IMR-90 (cell line): ENCODE measurements at regions of chr9 and their contacts with region 1.

Region 1: DNA sequence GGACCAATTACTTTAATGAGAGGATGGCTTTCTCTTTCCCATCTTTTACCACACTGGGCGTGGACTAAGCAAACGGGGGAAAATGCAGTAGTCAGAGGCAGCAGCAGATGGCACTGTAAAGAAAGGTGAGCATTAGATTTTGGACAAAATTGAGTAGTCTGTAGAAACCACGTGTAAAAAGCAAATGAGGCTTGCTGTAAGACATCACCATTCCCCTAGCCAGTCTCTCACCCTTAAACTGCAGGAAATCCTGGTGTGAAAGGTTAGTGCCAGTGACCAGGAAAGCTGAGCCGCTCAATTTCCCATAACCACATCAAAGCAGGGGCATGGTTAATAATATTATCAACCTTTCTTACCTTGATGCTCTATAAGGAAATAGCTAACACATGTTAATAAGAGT is 31.8 kb downstream of the SPATA31C2 start:
- DNase-seq: peak; percentile 36
- ATAC-seq: peak; percentile 77
- H3K4me3 ChIP-seq: no peak overlapping the region
- H3K27ac ChIP-seq: no peak overlapping the region
- H3K4me1 ChIP-seq: no peaks in the 10 kb centered on the region
- H3K27me3 ChIP-seq: peaks cover 6% of the 10 kb centered on the region; the same call in 1 of the 2 replicates
- CTCF ChIP-seq: peak; percentile 58
- POLR2A ChIP-seq: no peak
- RAD21 ChIP-seq: peak; percentile 50

Region 2: DNA sequence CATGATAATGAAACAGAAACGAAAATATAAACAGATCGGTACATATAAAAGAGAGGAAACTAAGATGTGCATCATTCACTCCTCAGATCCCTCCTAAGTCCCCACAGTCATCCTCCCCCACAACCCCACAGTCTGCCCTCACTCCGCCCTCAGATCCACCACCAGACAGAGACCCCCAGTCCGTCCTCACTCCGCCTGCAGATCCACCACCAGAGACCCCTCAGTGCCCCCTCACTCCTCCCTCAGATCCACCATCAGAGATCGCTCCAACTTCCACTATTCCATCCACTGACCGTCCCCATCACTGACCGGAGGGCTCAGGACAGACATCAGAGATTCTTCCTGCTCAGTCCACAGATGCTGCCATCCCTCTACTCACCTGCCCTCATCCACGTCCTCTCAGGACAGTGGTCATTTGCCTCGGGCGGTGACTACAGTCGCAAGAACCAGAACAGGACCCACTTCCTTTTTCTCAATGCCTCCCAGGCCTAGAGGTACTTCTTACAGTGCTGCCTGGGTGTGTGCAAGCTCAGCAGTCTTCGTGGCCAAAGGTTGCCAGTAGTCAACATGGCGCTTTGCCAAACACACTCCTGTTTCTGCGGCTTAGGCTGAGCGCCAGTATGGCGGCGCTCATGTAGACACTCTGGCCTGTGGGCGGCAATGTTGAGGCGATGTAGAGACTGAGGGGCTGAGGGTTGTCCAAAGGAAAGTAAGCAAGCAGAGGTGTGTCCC is 197.0 kb before region 1 on chr9:
- CTCF ChIA-PET with region 1: no interaction called
- POLR2A ChIA-PET with region 1: no interaction called
- dilution Hi-C with region 1: no loop called
- in situ Hi-C with region 1: no loop called
- intact Hi-C with region 1: no loop called
- DNase-seq: no peak
- ATAC-seq: no peak
- H3K4me3 ChIP-seq: no peak overlapping the region
- H3K27ac ChIP-seq: no peak overlapping the region
- H3K4me1 ChIP-seq: no peaks in the 10 kb centered on the region
- H3K27me3 ChIP-seq: no peaks in the 10 kb centered on the region
- CTCF ChIP-seq: no peak
- POLR2A ChIP-seq: no peak
- RAD21 ChIP-seq: no peak

Region 3: DNA sequence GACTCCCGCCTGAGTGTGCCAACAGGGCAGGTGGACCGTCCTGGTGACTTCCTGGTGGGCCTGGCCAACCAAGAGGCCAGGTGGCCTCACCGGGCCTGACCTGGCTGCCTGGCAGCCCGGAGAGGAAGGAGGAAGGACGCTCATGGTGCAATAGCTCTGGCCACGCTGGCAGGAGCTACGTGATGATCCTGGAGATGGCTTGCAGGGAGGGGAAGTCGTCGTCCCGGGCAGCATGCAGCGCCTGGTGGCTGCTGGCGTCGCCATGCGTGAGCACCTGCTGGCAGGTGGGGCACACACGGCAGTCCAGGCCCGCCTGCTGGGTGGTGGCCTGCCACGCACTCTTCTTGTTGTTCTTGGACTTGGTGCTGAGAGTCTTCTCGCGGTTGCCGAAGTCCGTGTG is 162.4 kb before region 1 on chr9:
- CTCF ChIA-PET with region 1: no interaction called
- POLR2A ChIA-PET with region 1: no interaction called
- dilution Hi-C with region 1: no loop called
- in situ Hi-C with region 1: no loop called
- intact Hi-C with region 1: loop called (anchors 10 kb)
- DNase-seq: no peak
- ATAC-seq: no peak
- H3K4me3 ChIP-seq: no peak overlapping the region
- H3K27ac ChIP-seq: no peak overlapping the region
- H3K4me1 ChIP-seq: no peaks in the 10 kb centered on the region
- H3K27me3 ChIP-seq: peaks cover 2% of the 10 kb centered on the region; the same call in 1 of the 2 replicates
- CTCF ChIP-seq: no peak
- POLR2A ChIP-seq: no peak
- RAD21 ChIP-seq: no peak

Region 4: GRCh38 chr9:88433583-88434255 is 327.2 kb after region 1 on chr9:
- CTCF ChIA-PET with region 1: no interaction called
- POLR2A ChIA-PET with region 1: no interaction called
- dilution Hi-C with region 1: no loop called
- in situ Hi-C with region 1: no loop called
- intact Hi-C with region 1: no loop called
- DNase-seq: peak; percentile 56
- ATAC-seq: no peak
- H3K4me3 ChIP-seq: no peak overlapping the region
- H3K27ac ChIP-seq: no peak overlapping the region
- H3K4me1 ChIP-seq: peaks cover 14% of the 10 kb centered on the region
- H3K27me3 ChIP-seq: no peaks in the 10 kb centered on the region
- CTCF ChIP-seq: no peak
- POLR2A ChIP-seq: no peak
- RAD21 ChIP-seq: no peak